HEK293T (cell line): ENCODE measurements at regions of chr2 and their contacts with region 1.

Region 1: GRCh38 chr2:74334931-74335333 is 8.3 kb downstream of the SLC4A5 start:
- DNase-seq: peak; percentile 89

Region 2: GRCh38 chr2:73823916-73824523 is 510.9 kb before region 1 on chr2:
- CTCF ChIA-PET with region 1: interaction called, 10 read pairs
- POLR2A ChIA-PET with region 1: no interaction called
- DNase-seq: peak; percentile 46

Region 3: DNA sequence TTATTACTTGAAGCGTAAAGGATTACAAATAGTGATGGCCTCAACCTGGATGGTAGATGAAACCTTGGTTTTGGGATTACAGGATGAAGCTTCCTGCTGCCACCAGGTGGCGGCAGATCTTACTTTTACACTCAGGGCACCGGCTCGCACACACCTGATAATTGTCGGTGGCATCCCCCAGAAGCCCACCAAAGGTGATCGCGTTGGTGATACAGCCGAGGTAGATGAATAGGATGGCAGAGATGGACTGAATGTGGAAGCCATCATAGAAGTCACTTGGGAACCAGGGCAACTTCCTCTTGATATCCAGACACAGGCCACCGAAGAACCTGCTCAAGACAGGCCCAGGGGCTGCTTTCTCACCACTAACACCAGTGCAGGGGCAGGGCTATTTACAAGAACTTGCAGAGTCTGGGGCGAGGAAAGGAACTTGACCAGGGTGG is 84.7 kb before region 1 on chr2:
- CTCF ChIA-PET with region 1: interaction called, 17 read pairs
- POLR2A ChIA-PET with region 1: no interaction called
- DNase-seq: peak; percentile 72

Region 4: DNA sequence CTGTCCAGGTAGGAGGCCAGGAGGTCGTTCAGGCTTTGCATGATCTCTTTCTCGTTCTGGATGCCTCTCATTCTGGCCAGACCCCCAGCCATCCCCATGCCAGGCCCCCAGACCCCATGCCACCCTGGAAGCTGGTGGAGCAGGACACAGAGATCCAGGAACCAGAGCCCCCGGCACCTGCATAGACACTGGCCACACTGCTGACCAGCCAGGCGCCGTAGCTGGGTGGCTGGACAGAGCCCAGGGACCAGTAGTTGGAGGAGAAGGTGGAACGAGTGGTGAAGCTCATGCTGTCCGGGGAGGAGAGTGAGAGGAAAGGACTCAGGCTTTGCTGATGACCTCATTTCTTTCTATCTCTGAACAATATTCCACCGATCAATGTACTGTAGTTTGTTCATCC is 27.2 kb before region 1 on chr2:
- CTCF ChIA-PET with region 1: no interaction called
- POLR2A ChIA-PET with region 1: no interaction called
- DNase-seq: no peak

Region 5: GRCh38 chr2:74345272-74345943 is 10.5 kb after region 1 on chr2:
- CTCF ChIA-PET with region 1: interaction called, 16 read pairs
- POLR2A ChIA-PET with region 1: no interaction called
- DNase-seq: no peak